OCI-LY7 (cell line): ENCODE measurements at regions of chr12 and their contacts with region 1.

Region 1: GRCh38 chr12:82685790-82686167 is 927 bp upstream of the TMTC2 start:
- DNase-seq: peak; percentile 96
- H3K4me3 ChIP-seq: peak overlapping the region; percentile 79
- H3K27ac ChIP-seq: peak overlapping the region; percentile 45
- H3K4me1 ChIP-seq: peaks cover 55% of the 10 kb centered on the region
- CTCF ChIP-seq: peak; percentile 91

Region 2: DNA sequence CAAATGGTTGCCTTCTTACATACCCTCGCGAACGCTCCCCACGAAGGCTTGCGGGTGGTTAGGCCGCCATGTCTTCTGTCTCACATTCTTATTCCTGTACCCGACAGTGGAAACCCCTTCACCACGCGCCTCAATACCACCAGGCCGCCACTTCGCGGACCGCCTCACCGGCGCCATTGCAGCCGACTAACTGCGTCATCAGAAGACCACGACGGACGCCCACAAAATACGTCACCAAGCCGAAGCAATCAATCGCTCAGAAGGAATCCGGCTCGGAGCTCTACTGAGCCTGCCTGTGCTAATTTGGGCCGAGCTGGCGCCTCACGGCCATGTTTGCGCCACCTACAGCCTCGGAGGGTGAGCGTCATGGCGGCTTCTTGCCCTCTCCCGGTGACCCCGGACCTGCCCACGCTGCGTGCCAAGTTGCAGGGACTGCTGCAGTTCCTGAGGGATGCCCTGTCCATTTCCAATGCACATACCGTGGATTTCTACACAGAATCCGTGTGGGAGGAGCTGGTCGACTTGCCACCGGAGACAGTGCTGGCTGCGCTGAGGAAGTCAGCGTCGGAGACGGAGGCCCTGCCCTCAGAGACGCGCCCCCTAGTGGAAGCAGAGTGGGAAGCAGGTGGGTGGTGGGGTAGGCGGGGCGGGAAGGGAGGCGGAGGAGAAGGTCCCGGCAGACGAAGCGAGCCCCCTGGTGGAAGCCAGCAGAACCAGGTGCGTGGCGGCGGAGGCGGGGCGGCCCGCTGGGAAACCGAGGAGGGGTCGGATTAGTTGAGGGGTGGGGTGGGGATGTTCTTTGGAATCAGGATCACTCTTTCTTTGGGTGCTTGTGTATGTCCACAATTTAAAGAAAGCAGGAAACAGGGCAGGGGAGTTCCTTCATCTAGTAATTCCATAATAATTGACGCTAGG is 327.3 kb before region 1 on chr12 and contains the starts of genes CCDC59 and METTL25:
- CTCF ChIA-PET with region 1: no interaction called
- POLR2A ChIA-PET with region 1: interaction called, 7 read pairs
- intact Hi-C with region 1: loop called (anchors 1 kb)
- DNase-seq: peak; percentile 98
- H3K4me3 ChIP-seq: peak within 1 kb of the TSS; percentile 94
- H3K27ac ChIP-seq: peak within 1 kb of the TSS; percentile 68
- H3K4me1 ChIP-seq: peaks cover 18% of the 10 kb centered on the region
- CTCF ChIP-seq: peak; percentile 98
- total RNA-seq, gene CCDC59: 49.0 and 55.0 TPM in 2 replicates
- total RNA-seq, gene METTL25: 8.0 and 13.1 TPM in 2 replicates

Region 3: DNA sequence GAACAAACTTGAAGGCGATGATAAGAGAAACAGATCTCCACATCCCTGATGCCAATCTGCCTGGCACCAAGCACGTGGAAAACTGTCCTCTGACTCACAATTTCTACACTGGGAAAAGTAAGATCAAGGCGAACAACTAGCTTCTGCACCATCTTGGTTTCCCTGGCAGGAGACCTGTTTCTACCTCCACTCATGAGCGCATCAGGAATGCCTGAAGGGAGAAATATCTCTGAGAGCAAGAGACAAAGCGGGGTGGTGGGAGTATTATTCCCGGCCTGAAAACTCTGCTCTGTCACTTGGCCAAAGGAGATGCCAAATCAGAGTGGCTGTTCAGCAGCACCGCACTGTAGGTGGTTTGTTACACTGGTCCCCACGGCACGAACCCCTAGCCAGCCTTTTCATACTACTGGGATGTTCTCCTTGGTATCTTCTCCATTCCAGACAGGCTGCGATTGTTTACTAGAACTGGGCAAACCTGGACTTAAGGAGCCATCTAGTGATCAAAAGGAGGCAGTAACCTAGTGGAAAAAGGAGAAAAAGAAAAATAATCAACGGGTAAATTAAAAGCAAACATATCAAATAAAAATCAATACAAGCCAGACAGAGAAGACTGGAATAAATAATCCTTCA is 58.1 kb before region 1 on chr12:
- CTCF ChIA-PET with region 1: no interaction called
- POLR2A ChIA-PET with region 1: no interaction called
- intact Hi-C with region 1: no loop called
- DNase-seq: no peak
- H3K4me3 ChIP-seq: no peak overlapping the region
- H3K27ac ChIP-seq: no peak overlapping the region
- H3K4me1 ChIP-seq: no peaks in the 10 kb centered on the region
- CTCF ChIP-seq: peak; percentile 50

Region 4: GRCh38 chr12:83005534-83006197 is 319.9 kb after region 1 on chr12:
- CTCF ChIA-PET with region 1: no interaction called
- POLR2A ChIA-PET with region 1: no interaction called
- intact Hi-C with region 1: loop called (anchors 5 kb)
- DNase-seq: no peak
- H3K4me3 ChIP-seq: no peak overlapping the region
- H3K27ac ChIP-seq: no peak overlapping the region
- H3K4me1 ChIP-seq: no peaks in the 10 kb centered on the region
- CTCF ChIP-seq: no peak

Region 5: DNA sequence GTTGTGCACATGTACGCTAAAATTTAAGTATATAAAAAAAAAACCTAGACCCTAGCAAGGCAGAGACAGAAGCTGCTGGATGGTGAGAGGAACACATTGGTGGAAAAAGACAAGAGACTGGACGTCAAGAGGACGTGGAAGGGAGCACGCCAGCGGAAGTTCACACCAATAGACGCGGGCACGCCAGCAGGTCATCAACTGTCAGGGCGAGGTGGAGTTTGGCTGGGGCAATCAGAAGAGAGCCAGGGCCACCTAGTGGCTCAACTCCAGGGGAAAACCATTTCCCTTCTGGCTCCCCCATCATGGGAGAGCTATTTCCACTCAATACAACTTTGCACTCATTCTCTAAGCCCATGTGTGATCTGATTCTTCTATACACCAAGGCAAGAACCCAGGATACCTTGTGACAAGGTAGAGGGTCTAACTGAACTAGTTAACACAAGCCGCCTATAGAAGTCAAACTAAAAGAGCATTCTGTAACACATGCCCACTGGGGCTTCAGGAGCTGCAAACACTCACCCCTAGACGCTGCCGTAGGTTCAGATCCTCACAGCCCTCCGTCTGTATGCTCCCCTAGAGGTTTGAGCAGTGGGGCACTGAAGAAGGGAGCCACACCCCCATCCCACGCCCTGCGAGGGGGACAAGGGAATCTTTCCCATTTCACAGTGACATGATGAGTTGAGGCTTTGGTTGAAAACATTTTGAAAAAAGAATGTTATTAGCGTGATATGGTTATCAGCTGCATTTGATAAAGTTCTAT is 703.6 kb after region 1 on chr12:
- CTCF ChIA-PET with region 1: no interaction called
- POLR2A ChIA-PET with region 1: interaction called, 4 read pairs
- intact Hi-C with region 1: loop called (anchors 10 kb)
- DNase-seq: no peak
- H3K4me3 ChIP-seq: no peak overlapping the region
- H3K27ac ChIP-seq: no peak overlapping the region
- H3K4me1 ChIP-seq: no peaks in the 10 kb centered on the region
- CTCF ChIP-seq: peak; percentile 25; the same call in 1 of the 2 replicates

Region 6: GRCh38 chr12:83823431-83823963 is 1137.7 kb after region 1 on chr12:
- CTCF ChIA-PET with region 1: no interaction called
- POLR2A ChIA-PET with region 1: no interaction called
- intact Hi-C with region 1: loop called (anchors 5 kb)
- DNase-seq: peak; percentile 55
- H3K4me3 ChIP-seq: no peak overlapping the region
- H3K27ac ChIP-seq: no peak overlapping the region
- H3K4me1 ChIP-seq: no peaks in the 10 kb centered on the region
- CTCF ChIP-seq: peak; percentile 70